ENCODE measurements at regions of chr1 and their contacts with region 1.

Region 1: GRCh38 chr1:204417231-204417997 is 5.8 kb upstream of the PPP1R15B start:
- DNase-seq: peak; percentile 35 to 91
- H3K4me3 ChIP-seq: peak overlapping the region; percentile 28 to 36
- H3K27ac ChIP-seq: peak overlapping the region; percentile 87 to 92
- H3K4me1 ChIP-seq: peaks cover 5 to 15% of the 10 kb centered on the region in 2 donors
- H3K27me3 ChIP-seq: no peaks in the 10 kb centered on the region
- CTCF ChIP-seq: no peak

Region 2: DNA sequence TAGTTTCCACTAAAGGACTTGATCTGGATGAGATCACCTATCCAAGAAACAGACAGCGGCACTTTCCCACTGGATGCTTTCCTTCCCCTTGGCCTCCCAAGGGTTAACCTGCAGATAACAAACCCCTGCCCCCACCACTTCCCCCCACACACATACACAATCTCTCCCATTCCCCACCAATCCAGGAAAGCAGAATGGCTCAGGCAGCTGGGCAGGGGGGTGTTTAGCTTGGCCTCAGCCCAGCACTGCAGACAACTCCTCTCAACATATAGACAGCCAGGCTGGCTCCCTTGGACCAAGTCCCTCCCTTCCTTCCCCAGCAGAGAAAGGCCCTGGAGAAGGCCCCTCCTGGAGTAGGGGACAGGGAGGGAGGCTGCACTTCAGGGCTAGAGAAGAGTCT is 82.3 kb before region 1 on chr1:
- intact Hi-C with region 1: no loop called
- DNase-seq: no peak
- H3K4me3 ChIP-seq: no peak overlapping the region
- H3K27ac ChIP-seq: no peak overlapping the region
- H3K4me1 ChIP-seq: no peaks in the 10 kb centered on the region
- H3K27me3 ChIP-seq: no peaks in the 10 kb centered on the region
- CTCF ChIP-seq: no peak

Region 3: GRCh38 chr1:204438628-204439027 is 21.2 kb after region 1 on chr1:
- intact Hi-C with region 1: loop called (anchors 2 kb)
- DNase-seq: peak; percentile 59 to 92
- H3K4me3 ChIP-seq: no peak overlapping the region
- H3K27ac ChIP-seq: peak overlapping the region; percentile 80 to 94
- H3K4me1 ChIP-seq: peaks cover 21 to 59% of the 10 kb centered on the region in 2 donors
- H3K27me3 ChIP-seq: no peaks in the 10 kb centered on the region
- CTCF ChIP-seq: no peak

Measured in ascending aorta (tissue), 2 donors.